PC-3 (cell line): ENCODE measurements at regions of chr14 and their contacts with region 1.

Region 1: DNA sequence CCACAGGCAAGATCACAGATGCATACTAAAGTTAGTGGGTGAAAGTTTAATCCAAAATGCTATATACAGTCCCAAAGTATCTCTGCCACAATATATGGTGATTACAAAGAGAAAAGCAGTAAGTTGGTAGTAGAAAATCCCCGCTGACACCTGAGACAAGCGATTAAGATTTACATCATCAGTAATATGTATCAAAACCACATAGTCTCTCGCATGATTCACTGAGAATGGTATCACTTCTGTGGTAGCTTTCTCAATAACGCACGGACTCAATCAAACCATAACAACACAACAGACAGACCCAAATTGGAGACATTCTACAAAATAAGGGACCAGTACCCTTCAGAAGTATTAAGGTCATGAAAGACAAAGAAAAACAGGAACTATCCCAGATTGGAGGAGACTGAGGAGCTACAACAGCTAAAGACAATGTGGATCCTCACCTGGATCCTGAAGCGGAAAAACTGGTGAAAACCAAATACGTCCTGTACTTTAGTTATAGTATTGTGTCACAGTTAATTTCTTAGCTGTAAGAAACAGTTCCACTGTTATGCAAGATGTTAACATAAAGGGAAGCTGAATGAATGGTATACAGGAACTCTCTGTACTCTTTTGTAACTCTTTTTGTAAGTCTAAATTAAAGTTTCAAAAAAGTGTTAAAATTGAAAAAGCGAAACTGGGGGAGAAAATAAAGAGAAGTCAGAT is 51.0 kb downstream of the SPTLC2 start:
- DNase-seq: no peak
- ATAC-seq: no peak
- H3K4me3 ChIP-seq: no peak overlapping the region
- H3K27ac ChIP-seq: no peak overlapping the region
- H3K4me1 ChIP-seq: peaks cover 11% of the 10 kb centered on the region
- H3K27me3 ChIP-seq: no peaks in the 10 kb centered on the region
- CTCF ChIP-seq: no peak

Region 2: GRCh38 chr14:77593501-77593961 is 28.1 kb after region 1 on chr14:
- CTCF ChIA-PET with region 1: no interaction called
- POLR2A ChIA-PET with region 1: interaction called, 7 read pairs
- intact Hi-C with region 1: loop called (anchors 1 kb)
- DNase-seq: peak; percentile 82
- ATAC-seq: peak; percentile 91
- H3K4me3 ChIP-seq: peak overlapping the region; percentile 42
- H3K27ac ChIP-seq: peak overlapping the region; percentile 60
- H3K4me1 ChIP-seq: peaks cover 31% of the 10 kb centered on the region
- H3K27me3 ChIP-seq: no peaks in the 10 kb centered on the region
- CTCF ChIP-seq: no peak

Region 3: DNA sequence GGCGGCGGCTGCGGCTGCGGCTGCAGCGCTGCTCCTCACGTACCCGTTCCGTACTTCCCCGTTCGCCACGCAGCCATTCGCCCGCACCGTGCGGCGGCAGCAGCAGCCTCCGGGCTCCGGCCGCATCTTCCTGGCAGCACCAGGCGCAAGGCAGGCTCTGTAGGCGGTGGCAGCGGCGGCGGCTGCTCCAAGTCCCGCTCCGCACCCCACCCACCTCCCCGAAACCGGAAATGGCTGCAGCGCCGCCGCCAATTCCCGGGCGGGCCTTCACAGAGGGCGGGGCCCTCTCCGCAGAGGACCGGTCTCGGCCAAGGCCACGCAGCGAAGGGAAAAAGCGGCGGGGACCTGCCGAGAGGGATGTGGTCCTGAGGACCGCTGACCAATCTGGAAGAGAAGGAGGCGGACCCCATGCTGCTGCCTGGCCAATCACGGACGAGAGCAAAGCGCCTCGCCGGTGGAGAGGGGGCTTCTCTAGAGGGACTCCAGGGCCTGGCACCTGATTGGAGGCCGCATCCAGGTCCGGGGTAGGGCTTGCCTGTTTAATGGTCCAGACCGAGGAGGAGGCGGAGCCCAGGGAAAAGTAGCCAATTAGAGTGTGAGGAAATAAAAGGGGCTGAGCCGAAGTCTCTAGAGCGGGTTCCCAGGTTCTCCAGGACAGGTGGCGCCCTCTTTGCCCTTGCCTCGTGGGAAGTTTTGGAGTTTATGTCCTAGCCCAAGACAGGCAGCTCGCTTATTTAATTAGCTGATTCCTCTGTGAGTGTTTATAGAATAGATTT is 51.2 kb after region 1 on chr14 and contains the start of gene SPTLC2:
- CTCF ChIA-PET with region 1: no interaction called
- POLR2A ChIA-PET with region 1: interaction called, 7 read pairs
- intact Hi-C with region 1: loop called (anchors 1 kb)
- DNase-seq: peak; percentile 99
- ATAC-seq: peak; percentile 94
- H3K4me3 ChIP-seq: peak within 1 kb of the TSS; percentile 97
- H3K27ac ChIP-seq: peak within 1 kb of the TSS; percentile 45
- H3K4me1 ChIP-seq: peaks cover 28% of the 10 kb centered on the region
- H3K27me3 ChIP-seq: no peaks in the 10 kb centered on the region
- CTCF ChIP-seq: peak; percentile 42; the same call in 1 of the 2 replicates
- total RNA-seq, gene SPTLC2: 25.6 and 27.6 TPM in 2 replicates